Activated T-helper 1 cell treated with anti-CD3 and anti-CD28 coated beads, Interleukin-12 subunit alpha, Interleukin-12 subunit beta, Interleukin-2, Interleukin-4 antibody, amounts not matched to agents 30 ng/mL and 10 ng/mL and 1 ng/mL, durations not matched to agents 14 hours and 24 hours and 36 hours (primary cell): ENCODE measurements at regions of chr4 and their contacts with region 1.

Region 1: GRCh38 chr4:10554694-10555093 is 97.5 kb upstream of the ZNF518B start:
- DNase-seq: peak; percentile 22
- H3K4me3 Mint-ChIP-seq: no peak overlapping the region
- H3K27ac Mint-ChIP-seq: no peak overlapping the region
- H3K4me1 Mint-ChIP-seq: no peaks in the 10 kb centered on the region
- H3K27me3 Mint-ChIP-seq: peaks cover 4% of the 10 kb centered on the region

Region 2: DNA sequence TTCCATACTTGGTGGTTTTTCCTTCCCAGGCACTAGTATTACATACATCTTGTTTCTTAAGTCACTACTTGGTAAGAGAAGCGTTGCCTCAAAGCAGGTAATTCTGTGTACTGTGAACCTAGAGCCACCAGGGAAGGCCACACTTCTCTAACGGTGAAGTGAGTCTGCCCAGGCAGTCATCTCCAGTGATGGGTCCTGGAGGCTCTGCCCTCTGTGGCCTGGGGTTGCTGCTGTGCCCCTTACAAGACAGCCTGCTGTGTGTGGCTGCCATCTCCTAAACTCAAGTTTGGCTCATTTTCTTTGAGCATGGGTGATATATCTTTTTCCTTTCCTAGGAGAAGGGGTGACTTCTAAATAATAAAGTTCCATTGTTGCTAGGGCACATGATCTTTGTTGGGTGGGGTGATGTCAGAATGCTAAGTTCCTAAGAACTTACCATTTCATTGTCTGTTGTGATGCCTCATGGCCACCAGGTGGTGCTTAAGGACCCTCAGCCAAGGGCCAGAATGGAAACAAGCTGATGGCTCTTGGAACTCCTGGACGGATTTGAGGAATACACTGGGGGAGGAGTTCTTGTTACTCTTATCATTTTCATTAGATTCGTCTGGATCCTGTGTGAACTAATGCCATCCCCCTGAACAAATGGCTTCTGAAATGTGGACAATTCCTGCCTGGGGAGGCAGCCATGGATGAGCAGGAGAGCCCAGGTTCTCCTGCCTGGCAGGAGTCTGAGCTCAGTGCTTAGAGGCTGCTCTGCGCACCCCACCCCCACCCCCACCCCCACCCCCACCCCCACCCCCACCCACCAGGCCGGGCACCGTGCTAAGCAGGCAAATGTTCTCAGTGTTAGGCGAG is 397.0 kb before region 1 on chr4:
- intact Hi-C with region 1: loop called (anchors 1 kb)
- DNase-seq: peak; percentile 16
- H3K4me3 Mint-ChIP-seq: no peak overlapping the region
- H3K27ac Mint-ChIP-seq: no peak overlapping the region
- H3K4me1 Mint-ChIP-seq: peaks cover 43% of the 10 kb centered on the region
- H3K27me3 Mint-ChIP-seq: peaks cover 5% of the 10 kb centered on the region

Region 3: GRCh38 chr4:10571909-10572308 is 17.2 kb after region 1 on chr4:
- intact Hi-C with region 1: no loop called
- DNase-seq: no peak
- H3K4me3 Mint-ChIP-seq: no peak overlapping the region
- H3K27ac Mint-ChIP-seq: no peak overlapping the region
- H3K4me1 Mint-ChIP-seq: no peaks in the 10 kb centered on the region
- H3K27me3 Mint-ChIP-seq: no peaks in the 10 kb centered on the region

Region 4: DNA sequence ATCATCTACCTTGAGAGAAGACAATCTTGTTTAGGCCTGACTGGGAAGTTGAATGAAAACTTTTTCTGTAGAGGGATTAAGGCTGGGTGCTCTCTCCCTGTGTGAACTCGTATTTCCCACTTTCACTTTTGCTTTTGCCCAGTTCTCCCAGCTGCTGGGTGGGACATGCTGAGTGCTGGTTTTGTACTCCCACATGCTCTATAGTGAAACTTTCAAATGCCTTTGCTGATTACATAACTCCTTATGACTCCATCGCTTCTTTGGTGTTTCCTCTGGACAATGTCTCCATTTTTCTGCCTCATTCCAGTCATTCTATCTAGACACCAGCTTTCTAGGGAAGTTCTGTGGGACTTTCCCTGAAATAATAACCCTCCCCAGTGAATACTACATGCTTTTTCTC is 29.3 kb after region 1 on chr4:
- intact Hi-C with region 1: no loop called
- DNase-seq: no peak
- H3K4me3 Mint-ChIP-seq: no peak overlapping the region
- H3K27ac Mint-ChIP-seq: no peak overlapping the region
- H3K4me1 Mint-ChIP-seq: peaks cover 20% of the 10 kb centered on the region
- H3K27me3 Mint-ChIP-seq: no peaks in the 10 kb centered on the region

Region 5: GRCh38 chr4:10832806-10833628 is 278.3 kb after region 1 on chr4:
- intact Hi-C with region 1: no loop called
- DNase-seq: no peak
- H3K4me3 Mint-ChIP-seq: no peak overlapping the region
- H3K27ac Mint-ChIP-seq: no peak overlapping the region
- H3K4me1 Mint-ChIP-seq: peaks cover 5% of the 10 kb centered on the region
- H3K27me3 Mint-ChIP-seq: no peaks in the 10 kb centered on the region

Region 6: GRCh38 chr4:11424000-11424399 is 869.3 kb after region 1 on chr4:
- intact Hi-C with region 1: loop called (anchors 1 kb)
- DNase-seq: no peak
- H3K4me3 Mint-ChIP-seq: no peak overlapping the region
- H3K27ac Mint-ChIP-seq: no peak overlapping the region
- H3K4me1 Mint-ChIP-seq: no peaks in the 10 kb centered on the region
- H3K27me3 Mint-ChIP-seq: peaks cover 28% of the 10 kb centered on the region

Region 7: DNA sequence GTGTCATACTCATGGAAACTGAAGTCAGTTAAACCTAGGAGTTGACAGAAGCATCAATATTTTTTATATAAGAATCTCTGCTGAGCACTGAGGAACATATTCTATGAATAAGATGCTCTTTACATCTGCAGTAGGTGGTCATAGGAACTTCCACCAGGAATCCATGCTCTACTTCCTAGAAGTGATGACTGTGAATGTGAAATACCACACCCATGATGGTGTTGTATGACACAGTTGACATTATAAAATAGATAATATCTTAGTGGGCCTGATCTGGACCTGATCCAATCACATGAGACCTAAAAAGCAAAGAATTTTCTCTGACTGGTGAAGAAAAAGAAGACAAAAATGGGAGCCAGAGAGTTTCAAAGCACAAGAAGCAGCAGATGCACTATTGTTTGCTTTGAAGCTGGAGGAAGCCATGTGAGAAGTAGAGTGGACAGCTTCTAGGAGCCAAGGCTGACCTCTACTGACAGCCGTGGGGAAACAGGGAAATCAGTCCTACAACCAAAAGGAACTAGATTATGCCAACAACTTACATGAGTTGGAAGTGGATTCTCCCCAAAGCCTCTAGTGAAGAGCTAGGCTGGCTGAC is 942.6 kb after region 1 on chr4:
- intact Hi-C with region 1: loop called (anchors 1 kb)
- DNase-seq: no peak
- H3K4me3 Mint-ChIP-seq: no peak overlapping the region
- H3K27ac Mint-ChIP-seq: no peak overlapping the region
- H3K4me1 Mint-ChIP-seq: peaks cover 6% of the 10 kb centered on the region
- H3K27me3 Mint-ChIP-seq: peaks cover 4% of the 10 kb centered on the region

Region 8: DNA sequence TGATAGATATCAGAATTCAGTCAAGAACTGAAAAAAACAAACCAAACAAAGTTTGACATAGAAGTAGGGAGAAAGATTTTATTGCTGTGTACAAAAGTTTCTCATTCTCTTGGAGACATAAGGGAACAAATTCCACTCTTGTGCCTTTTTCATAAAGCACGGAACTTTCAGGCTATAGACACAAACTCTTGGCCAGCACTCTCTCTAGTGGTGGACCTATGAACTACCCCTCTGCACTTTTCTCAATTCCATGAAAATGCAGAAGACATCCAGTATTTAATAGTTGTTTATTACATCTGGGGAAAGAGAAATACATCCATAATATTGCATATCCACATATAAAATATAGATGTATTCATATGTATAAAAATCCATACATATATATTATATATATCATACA is 1165.6 kb after region 1 on chr4:
- intact Hi-C with region 1: loop called (anchors 2 kb)
- DNase-seq: no peak
- H3K4me3 Mint-ChIP-seq: no peak overlapping the region
- H3K27ac Mint-ChIP-seq: no peak overlapping the region
- H3K4me1 Mint-ChIP-seq: no peaks in the 10 kb centered on the region
- H3K27me3 Mint-ChIP-seq: no peaks in the 10 kb centered on the region